Colonic mucosa (tissue), 4 donors: ENCODE measurements at regions of chr2 and their contacts with region 1.

Region 1: DNA sequence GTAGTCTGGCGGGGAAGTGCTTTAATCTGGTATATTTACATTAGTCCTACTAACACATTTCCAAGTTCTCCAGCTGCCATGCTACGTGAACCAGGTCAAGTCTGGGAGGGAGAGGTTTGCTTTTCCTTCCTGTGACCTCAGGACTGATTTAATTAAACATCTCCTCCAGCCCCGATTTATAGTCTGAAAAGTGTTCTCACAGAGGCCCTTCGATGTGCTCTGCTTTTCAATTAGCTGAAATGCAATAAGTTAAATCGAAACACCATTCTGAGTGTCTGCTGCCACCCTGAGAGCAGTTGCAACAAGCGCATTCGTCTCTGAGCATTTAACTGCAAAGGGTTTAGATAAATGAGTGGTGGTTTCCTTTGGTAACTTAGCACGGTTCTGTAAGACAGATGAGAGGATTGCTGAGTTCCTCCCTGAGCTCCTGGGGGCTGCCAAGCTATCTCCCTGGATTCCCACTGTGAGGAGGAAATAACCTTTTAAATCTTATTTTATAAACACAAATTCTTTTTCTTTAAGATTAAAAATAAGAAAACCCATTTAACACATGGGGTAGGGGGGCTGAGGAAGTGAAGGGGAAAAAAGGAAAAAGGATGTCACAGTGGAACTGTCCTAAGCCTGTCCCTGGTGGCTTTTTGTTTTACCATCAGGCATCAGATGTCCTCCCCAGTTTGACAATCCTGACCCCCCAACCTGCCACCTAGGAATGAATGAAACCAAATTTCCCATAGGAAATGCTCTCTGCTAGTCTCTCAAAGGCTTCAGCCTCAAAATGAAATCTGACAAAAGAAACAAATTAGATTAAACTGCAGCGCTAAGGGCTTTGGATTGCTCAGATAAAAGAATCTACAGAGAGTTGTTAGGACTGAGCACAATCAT is 56.5 kb upstream of the CREB1 start:
- DNase-seq: no peak
- H3K4me3 ChIP-seq: no peak overlapping the region
- H3K27ac ChIP-seq: no peak overlapping the region
- H3K4me1 ChIP-seq: no peaks in the 10 kb centered on the region
- H3K27me3 ChIP-seq: no peaks in the 10 kb centered on the region
- CTCF ChIP-seq: no peak

Region 2: DNA sequence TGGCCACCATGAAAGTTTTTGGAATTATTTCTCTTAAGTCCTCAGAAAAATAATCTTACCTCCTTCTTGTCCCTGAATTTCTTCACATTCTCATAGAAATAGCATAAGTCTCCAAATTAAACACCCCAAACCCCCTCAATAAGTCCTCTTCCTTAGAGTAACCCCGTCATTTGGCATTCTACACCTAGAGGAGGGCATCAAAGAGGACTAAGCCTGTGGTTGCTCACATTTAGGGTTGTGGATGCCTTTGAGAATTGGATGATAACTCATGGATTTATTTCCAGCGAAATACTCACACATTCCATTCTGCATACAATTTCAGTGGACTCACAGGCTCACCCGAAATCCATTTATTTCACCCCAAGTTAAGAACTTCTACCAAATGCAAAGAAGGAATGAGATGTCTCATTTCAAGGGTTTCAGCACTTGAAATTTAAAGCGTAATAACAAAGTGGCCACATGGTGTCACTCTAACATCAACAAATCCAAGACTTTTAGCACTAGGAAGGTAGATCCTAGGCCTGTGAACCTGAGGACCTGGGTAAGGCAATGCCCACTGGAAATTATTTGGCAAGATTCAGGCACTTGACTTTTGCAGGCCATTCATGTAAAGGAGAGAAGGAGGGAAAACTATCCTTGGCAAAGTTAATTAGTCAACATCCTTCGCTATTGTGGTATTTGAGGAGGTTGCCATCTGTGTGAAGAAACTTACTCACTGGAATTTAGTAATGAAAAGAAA is 779.7 kb before region 1 on chr2:
- intact Hi-C with region 1: loop called (anchors 10 kb)
- DNase-seq: peak; percentile 29
- H3K4me3 ChIP-seq: no peak overlapping the region
- H3K27ac ChIP-seq: no peak overlapping the region
- H3K4me1 ChIP-seq: no peaks in the 10 kb centered on the region
- H3K27me3 ChIP-seq: no peaks in the 10 kb centered on the region
- CTCF ChIP-seq: peak; percentile 43

Region 3: DNA sequence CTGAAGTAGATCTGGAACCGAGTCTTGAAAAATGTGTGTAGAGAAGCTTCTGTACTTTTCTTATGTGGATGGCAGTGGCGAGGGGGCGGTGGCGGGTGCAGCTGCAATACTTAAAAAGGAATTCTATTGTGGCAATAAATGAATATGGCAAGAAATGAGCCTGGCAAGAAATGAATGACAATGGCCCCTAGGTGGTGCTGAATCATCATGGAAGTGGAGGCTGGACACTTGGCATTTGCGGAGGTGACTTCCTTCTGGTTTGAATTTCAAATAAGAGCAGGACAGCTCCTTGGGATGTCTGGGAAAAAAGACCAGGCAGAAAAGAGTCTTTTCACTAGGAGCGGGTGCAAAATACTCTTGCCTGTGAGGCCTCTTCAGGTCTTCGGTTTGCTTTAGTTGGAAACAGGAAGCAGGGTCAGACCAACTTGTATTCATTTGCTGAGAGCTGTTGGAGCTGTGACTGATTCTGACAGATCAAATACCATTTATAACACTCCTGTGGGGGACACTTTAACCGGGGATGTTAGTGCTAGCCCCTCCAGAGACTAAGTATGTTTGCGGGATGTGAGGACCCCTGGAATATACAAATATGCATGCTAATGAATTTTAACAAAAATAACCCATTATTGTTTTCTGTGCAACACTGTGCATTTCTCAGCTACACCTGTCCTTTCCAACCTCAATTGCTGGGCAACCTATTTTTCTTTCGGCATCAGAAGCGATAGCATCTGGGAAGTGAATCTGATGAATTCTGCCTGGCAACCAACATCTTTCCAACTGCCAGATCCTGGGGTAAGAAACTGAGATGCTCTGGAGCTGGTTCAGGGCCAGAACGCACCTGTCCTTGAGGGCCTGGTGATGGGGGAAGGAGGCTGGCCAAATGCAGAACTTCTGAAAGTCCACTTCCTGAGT is 672.5 kb before region 1 on chr2:
- intact Hi-C with region 1: loop called (anchors 5 kb)
- DNase-seq: peak; percentile 56
- H3K4me3 ChIP-seq: no peak overlapping the region
- H3K27ac ChIP-seq: no peak overlapping the region
- H3K4me1 ChIP-seq: no peaks in the 10 kb centered on the region
- H3K27me3 ChIP-seq: no peaks in the 10 kb centered on the region
- CTCF ChIP-seq: peak; percentile 46

Region 4: GRCh38 chr2:206873423-206873822 is 599.9 kb before region 1 on chr2:
- intact Hi-C with region 1: no loop called
- DNase-seq: no peak
- H3K4me3 ChIP-seq: no peak overlapping the region
- H3K27ac ChIP-seq: no peak overlapping the region
- H3K4me1 ChIP-seq: no peaks in the 10 kb centered on the region
- H3K27me3 ChIP-seq: no peaks in the 10 kb centered on the region
- CTCF ChIP-seq: no peak

Region 5: GRCh38 chr2:207625018-207625907 is 152.0 kb after region 1 on chr2 and contains the start of gene METTL21A:
- intact Hi-C with region 1: no loop called
- DNase-seq: peak; percentile 94
- H3K4me3 ChIP-seq: peak within 1 kb of the TSS; percentile 93
- H3K27ac ChIP-seq: peak within 1 kb of the TSS; percentile 95
- H3K4me1 ChIP-seq: peaks cover 6% of the 10 kb centered on the region
- H3K27me3 ChIP-seq: no peaks in the 10 kb centered on the region
- CTCF ChIP-seq: peak; percentile 27
- total RNA-seq, gene METTL21A: 14.2 to 20.3 TPM

Region 6: GRCh38 chr2:207663870-207664549 is 190.7 kb after region 1 on chr2:
- intact Hi-C with region 1: no loop called
- DNase-seq: no peak
- H3K4me3 ChIP-seq: no peak overlapping the region
- H3K27ac ChIP-seq: no peak overlapping the region
- H3K4me1 ChIP-seq: no peaks in the 10 kb centered on the region
- H3K27me3 ChIP-seq: no peaks in the 10 kb centered on the region
- CTCF ChIP-seq: no peak